ENCODE measurements at regions of chr11 and their contacts with region 1.

Region 1: GRCh38 chr11:25988178-25988577 is 343.8 kb upstream of the ANO3 start:
- DNase-seq: no peak
- ATAC-seq: no peak
- H3K4me3 ChIP-seq: no peak overlapping the region
- H3K27ac ChIP-seq: no peak overlapping the region
- H3K4me1 ChIP-seq: no peaks in the 10 kb centered on the region
- H3K27me3 ChIP-seq: no peaks in the 10 kb centered on the region
- CTCF ChIP-seq: no peak

Region 2: DNA sequence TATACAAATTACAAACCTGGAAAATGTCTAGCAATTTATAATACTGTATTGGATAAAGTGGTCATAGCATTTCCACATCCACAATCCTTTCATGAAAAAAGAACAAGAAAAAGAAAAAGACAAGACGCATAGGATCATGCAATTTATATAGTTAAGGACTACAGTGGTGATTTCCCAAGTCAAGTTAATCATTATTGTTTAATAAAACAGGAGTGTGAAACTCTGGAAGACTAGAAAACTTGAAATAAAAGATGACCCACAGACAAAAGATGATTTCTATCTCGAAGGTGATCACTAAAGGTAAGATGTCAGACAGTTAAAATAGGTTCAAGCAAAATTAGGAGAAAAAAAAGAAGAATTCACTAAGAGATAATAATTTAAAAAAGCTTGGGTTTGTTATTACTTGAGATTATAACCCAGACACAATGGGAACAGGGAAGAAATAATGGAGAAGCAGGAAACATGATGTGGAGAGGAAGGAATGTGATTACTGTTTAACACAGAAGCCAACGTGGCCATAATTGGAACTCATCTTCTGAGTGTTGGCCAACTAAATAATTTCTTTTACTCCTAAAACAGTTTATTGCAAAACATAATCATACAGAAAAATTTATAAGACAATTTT is 97.4 kb before region 1 on chr11:
- intact Hi-C with region 1: no loop called
- DNase-seq: no peak
- ATAC-seq: no peak
- H3K4me3 ChIP-seq: no peak overlapping the region
- H3K27ac ChIP-seq: no peak overlapping the region
- H3K4me1 ChIP-seq: no peaks in the 10 kb centered on the region
- H3K27me3 ChIP-seq: no peaks in the 10 kb centered on the region
- CTCF ChIP-seq: no peak

Region 3: GRCh38 chr11:26134481-26135355 is 146.5 kb after region 1 on chr11:
- intact Hi-C with region 1: loop called in 9 of 10 experiments (anchors 2 to 5 kb)
- DNase-seq: no peak
- ATAC-seq: peak in 1 of 8 donors; percentile 51
- H3K4me3 ChIP-seq: no peak overlapping the region
- H3K27ac ChIP-seq: no peak overlapping the region
- H3K4me1 ChIP-seq: no peaks in the 10 kb centered on the region
- H3K27me3 ChIP-seq: no peaks in the 10 kb centered on the region
- CTCF ChIP-seq: peak in 8 of 9 donors; percentile 14 to 56 (median 38)

Region 4: DNA sequence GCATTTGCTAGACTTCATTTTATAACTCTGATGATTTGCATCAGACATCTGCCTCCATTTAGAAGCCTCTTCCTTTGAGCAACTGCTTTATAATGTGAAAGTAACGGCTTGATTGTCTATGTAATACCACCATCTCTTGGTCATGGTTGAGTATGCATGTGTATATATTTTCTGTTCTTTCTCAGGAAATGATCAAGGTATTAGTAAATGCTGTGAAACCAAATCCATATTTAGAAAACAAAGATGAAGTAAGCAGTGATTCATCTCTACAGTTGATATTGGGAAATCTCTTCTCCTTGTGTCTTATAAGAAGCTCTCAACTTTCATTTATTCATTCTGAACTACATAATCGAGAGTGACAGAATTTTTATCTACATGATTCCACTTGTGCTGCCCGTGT is 239.1 kb after region 1 on chr11:
- intact Hi-C with region 1: loop called in 7 of 10 experiments (anchors 2 to 10 kb)
- DNase-seq: no peak
- ATAC-seq: peak in 5 of 8 donors; percentile 38 to 67 (median 44)
- H3K4me3 ChIP-seq: no peak overlapping the region
- H3K27ac ChIP-seq: no peak overlapping the region
- H3K4me1 ChIP-seq: no peaks in the 10 kb centered on the region
- H3K27me3 ChIP-seq: no peaks in the 10 kb centered on the region
- CTCF ChIP-seq: peak; percentile 5 to 57 (median 39)